CD4-positive, alpha-beta memory T cell (primary cell): ENCODE measurements at regions of chr1 and their contacts with region 1.

Region 1: DNA sequence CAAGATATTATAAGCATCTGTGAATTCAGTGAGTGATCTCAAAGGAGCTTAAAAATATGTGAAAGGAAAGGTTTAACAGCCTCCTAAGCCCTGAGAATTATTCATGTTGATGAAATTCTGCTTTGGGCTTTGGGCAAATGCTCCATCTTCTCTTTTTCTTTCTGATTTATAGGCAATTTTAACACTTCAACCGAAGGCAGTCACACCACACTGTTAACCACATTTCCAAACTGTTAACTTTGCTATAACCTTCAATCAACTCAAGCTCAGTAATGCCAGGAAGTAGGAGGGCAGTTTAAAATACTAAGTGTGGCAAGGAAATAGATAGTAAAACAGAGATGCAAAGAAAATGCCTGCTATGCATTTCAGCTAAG is 54.4 kb upstream of the NEK7 start:
- DNase-seq: peak in 4 of 5 donors; percentile 5 to 30 (median 16)
- H3K4me3 ChIP-seq: no peak overlapping the region
- H3K4me3 Mint-ChIP-seq: peak overlapping the region in 6 of 8 donors; percentile 1 to 60 (median 50)
- H3K27ac ChIP-seq: no peak overlapping the region
- H3K27ac Mint-ChIP-seq: peak overlapping the region in 3 of 7 donors; percentile 6 to 54 (median 29)
- H3K4me1 ChIP-seq: peaks cover 19% of the 10 kb centered on the region
- H3K4me1 Mint-ChIP-seq: peaks cover 6 to 16% (median 11%) of the 10 kb centered on the region in 4 donors
- H3K27me3 ChIP-seq: no peaks in the 10 kb centered on the region
- H3K27me3 Mint-ChIP-seq: peaks cover 0 to 1% of the 10 kb centered on the region in 2 donors

Region 2: DNA sequence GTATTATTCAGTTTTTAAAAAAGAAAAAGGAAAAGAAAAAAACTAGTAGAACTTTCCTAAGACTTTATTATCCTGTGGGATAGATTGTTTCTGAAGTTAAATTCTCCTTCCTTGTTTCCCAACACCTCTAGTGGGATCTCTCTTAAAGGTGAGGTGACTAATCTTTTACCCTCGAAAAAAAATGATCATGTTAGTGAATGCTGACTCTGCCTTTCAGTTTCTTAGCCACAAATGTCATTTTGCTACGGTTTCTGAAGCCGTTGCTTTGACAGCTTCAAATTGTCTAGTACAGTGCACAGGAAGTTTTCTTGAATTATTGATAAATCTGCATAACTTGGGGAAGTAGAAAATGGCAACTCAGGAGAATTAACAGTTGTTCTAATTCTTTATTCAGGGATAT is 41.4 kb after region 1 on chr1:
- CTCF ChIA-PET with region 1: no interaction called
- POLR2A ChIA-PET with region 1: no interaction called
- intact Hi-C with region 1: loop called (anchors 5 kb)
- DNase-seq: no peak
- H3K4me3 ChIP-seq: no peak overlapping the region
- H3K4me3 Mint-ChIP-seq: no peak overlapping the region
- H3K27ac ChIP-seq: no peak overlapping the region
- H3K27ac Mint-ChIP-seq: no peak overlapping the region
- H3K4me1 ChIP-seq: no peaks in the 10 kb centered on the region
- H3K4me1 Mint-ChIP-seq: peaks cover 0 to 4% (median 2%) of the 10 kb centered on the region in 4 donors
- H3K27me3 ChIP-seq: no peaks in the 10 kb centered on the region
- H3K27me3 Mint-ChIP-seq: peaks cover 0 to 2% of the 10 kb centered on the region in 2 donors

Region 3: DNA sequence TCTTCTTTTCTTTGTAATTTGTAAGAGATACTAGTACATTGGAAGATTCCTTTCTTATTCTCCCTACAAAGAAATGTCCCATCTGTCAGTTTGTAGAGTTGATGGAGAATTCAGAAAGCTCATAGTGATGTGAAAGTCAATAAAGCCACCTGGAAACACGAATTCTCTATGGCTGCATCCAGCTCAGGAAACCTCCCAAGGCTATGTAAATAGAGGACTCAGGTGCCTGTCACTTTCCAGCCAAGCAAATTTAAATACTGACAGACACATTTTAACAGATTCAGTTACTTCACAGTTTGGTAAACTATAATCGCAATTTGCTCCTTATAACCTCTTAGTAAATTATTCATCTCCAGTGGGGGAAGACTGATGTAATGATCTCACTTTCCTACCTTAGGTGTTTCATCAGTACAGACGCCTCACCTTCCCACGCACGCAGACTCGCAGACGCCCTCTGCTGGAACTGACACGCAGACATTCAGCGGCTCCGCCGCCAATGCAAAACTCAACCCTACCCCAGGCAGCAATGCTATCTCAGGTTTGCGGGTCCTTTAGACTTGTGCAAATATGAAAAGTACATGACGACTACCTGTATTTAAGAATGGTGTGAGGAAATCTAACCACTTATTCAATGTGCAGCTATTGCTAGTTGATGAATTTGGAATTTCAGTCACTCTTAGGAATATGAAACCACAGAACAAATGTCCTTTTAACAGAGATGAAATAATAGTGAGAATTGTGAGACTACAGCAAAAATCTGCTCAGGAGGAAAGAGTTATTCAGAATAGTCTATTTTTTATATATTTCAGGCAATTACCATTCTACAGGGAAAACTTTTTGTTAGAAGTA is 597.0 kb after region 1 on chr1:
- CTCF ChIA-PET with region 1: no interaction called
- POLR2A ChIA-PET with region 1: no interaction called
- intact Hi-C with region 1: loop called (anchors 5 kb)
- DNase-seq: peak; percentile 60 to 72 (median 66)
- H3K4me3 ChIP-seq: no peak overlapping the region
- H3K4me3 Mint-ChIP-seq: peak overlapping the region in 6 of 8 donors; percentile 26 to 76 (median 52)
- H3K27ac ChIP-seq: peak overlapping the region; percentile 33
- H3K27ac Mint-ChIP-seq: peak overlapping the region; percentile 85 to 91 (median 87)
- H3K4me1 ChIP-seq: peaks cover 87% of the 10 kb centered on the region
- H3K4me1 Mint-ChIP-seq: peaks cover 59 to 82% (median 70%) of the 10 kb centered on the region in 4 donors
- H3K27me3 ChIP-seq: no peaks in the 10 kb centered on the region
- H3K27me3 Mint-ChIP-seq: no peaks in the 10 kb centered on the region